Endothelial cell of umbilical vein (primary cell): ENCODE measurements at regions of chr2 and their contacts with region 1.

Region 1: GRCh38 chr2:69724540-69725159 is 17.3 kb upstream of the ANXA4 start:
- DNase-seq: peak; percentile 80
- H3K4me3 ChIP-seq: peak overlapping the region in 1 of 3 experiments; percentile 55
- H3K27ac ChIP-seq: no peak overlapping the region
- H3K4me1 ChIP-seq: peaks cover 2% of the 10 kb centered on the region
- H3K27me3 ChIP-seq: no peaks in the 10 kb centered on the region
- CTCF ChIP-seq: peak; percentile 87 to 88
- POLR2A ChIP-seq: no peak

Region 2: DNA sequence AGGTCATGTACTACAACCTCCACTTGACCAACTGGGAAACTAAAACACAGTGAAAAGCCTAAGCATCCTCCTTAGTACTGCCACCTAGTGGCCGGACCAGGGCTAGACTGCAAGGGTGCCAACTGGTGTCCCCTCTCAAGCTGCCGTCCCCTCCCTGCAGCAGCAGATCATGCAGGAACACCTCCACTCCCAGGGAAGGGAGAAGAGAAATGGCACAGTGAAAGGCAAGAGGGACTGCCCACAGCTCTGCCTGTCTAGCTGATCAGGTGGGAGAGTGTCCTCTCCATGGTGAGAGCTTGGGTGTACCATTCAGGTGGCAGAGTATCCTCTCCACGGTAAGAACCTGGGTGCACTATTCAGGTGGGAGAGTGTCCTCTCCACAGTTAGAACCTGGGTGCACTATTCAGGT is 159.2 kb before region 1 on chr2:
- CTCF ChIA-PET with region 1: interaction called, 74 read pairs
- POLR2A ChIA-PET with region 1: no interaction called
- dilution Hi-C with region 1: no loop called
- intact Hi-C with region 1: no loop called
- DNase-seq: peak; percentile 47
- H3K4me3 ChIP-seq: no peak overlapping the region
- H3K27ac ChIP-seq: no peak overlapping the region
- H3K4me1 ChIP-seq: peaks cover 5% of the 10 kb centered on the region
- H3K27me3 ChIP-seq: no peaks in the 10 kb centered on the region
- CTCF ChIP-seq: peak; percentile 82 to 86
- POLR2A ChIP-seq: no peak

Region 3: DNA sequence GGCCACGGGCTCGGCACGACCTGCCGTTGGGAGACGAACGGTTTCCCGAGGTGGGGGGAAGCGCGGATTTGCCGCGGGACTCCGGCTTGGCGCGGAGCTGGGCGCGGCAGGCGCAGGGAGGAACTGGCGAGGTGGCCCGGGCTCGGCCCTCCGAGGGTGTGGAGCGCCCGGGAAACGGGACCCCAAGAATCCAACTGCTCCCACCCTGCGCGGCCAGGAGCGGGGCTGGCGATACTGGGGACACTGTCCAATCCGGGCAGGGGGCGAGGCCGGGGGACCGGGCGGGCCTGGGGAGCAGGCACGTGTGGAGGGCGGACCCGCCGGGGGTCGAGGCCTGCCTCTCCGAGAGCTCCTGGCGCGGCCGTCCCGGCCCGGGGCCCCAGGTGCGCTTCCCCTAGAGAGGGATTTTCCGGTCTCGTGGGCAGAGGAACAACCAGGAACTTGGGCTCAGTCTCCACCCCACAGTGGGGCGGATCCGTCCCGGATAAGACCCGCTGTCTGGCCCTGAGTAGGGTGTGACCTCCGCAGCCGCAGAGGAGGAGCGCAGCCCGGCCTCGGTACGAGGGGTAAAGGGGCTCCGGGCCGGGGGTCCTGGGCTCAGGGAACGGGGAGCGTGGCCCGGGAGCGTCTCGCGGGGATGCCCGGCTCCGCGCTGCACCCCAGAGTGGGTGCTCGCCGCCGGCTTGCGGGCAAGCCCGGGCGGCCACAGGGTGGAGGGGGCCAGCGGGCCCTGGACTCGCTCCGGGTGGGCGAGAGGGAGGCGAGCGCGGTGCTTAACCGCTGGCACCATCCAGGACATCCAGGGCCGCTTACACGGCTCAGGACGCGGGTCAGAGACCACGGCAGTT is 17.2 kb after region 1 on chr2 and contains the start of gene ANXA4:
- CTCF ChIA-PET with region 1: interaction called, 68 read pairs
- POLR2A ChIA-PET with region 1: interaction called, 5 read pairs
- dilution Hi-C with region 1: no loop called
- intact Hi-C with region 1: no loop called
- DNase-seq: peak; percentile 48
- H3K4me3 ChIP-seq: peak within 1 kb of the TSS; percentile 56 to 79 (median 75)
- H3K27ac ChIP-seq: peak within 1 kb of the TSS; percentile 30
- H3K4me1 ChIP-seq: peaks cover 9% of the 10 kb centered on the region
- H3K27me3 ChIP-seq: no peaks in the 10 kb centered on the region
- CTCF ChIP-seq: no peak
- POLR2A ChIP-seq: no peak
- total RNA-seq, gene ANXA4: 70.8 and 79.6 TPM in 2 replicates

Region 4: GRCh38 chr2:69789175-69789721 is 64.6 kb after region 1 on chr2:
- CTCF ChIA-PET with region 1: interaction called, 18 read pairs
- POLR2A ChIA-PET with region 1: no interaction called
- dilution Hi-C with region 1: no loop called
- intact Hi-C with region 1: no loop called
- DNase-seq: no peak
- H3K4me3 ChIP-seq: no peak overlapping the region
- H3K27ac ChIP-seq: no peak overlapping the region
- H3K4me1 ChIP-seq: no peaks in the 10 kb centered on the region
- H3K27me3 ChIP-seq: no peaks in the 10 kb centered on the region
- CTCF ChIP-seq: no peak
- POLR2A ChIP-seq: no peak

Region 5: GRCh38 chr2:69848201-69848770 is 123.6 kb after region 1 on chr2:
- CTCF ChIA-PET with region 1: interaction called, 26 read pairs
- POLR2A ChIA-PET with region 1: no interaction called
- dilution Hi-C with region 1: no loop called
- intact Hi-C with region 1: no loop called
- DNase-seq: no peak
- H3K4me3 ChIP-seq: no peak overlapping the region
- H3K27ac ChIP-seq: no peak overlapping the region
- H3K4me1 ChIP-seq: peaks cover 6% of the 10 kb centered on the region
- H3K27me3 ChIP-seq: no peaks in the 10 kb centered on the region
- CTCF ChIP-seq: no peak
- POLR2A ChIP-seq: no peak

Region 6: DNA sequence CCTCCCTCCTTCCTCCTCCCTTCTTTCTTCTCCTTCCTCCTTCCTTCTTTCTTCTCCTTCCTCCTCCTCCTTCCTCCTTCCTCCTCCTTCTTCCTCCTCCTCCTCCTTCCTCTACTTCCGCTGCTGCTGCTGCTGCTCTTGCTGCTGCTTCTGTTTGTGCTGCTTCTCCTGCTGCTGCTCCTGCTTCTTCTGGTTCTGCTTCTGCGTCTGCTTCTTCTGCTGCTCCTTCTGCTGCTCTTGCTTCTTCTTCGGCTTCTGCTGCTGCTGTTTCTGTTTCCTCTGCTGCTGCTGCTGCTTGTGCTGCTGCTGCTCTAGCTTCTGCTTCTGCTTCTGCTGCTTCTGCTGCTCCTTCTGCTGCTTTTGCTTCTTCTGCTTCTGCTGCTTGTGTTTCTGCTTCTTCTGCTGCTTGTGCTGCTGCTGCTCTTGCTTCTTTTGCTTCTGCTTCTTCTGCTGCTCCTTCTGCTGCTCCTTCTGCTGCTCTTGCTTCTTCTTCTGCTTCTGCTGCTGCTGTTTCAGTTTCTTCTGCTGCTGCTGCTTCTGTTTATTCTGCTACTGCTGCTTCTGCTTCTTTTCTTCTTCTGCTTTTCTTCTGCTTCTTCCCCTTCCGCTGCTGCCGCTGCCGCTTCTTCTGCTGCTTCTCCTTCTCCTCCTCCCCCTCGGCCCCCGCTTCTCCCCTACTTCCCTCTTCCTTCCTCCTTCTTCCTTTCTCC is 177.7 kb after region 1 on chr2:
- CTCF ChIA-PET with region 1: interaction called, 22 read pairs
- POLR2A ChIA-PET with region 1: no interaction called
- dilution Hi-C with region 1: no loop called
- intact Hi-C with region 1: no loop called
- DNase-seq: no peak
- H3K4me3 ChIP-seq: no peak overlapping the region
- H3K27ac ChIP-seq: no peak overlapping the region
- H3K4me1 ChIP-seq: no peaks in the 10 kb centered on the region
- H3K27me3 ChIP-seq: no peaks in the 10 kb centered on the region
- CTCF ChIP-seq: no peak
- POLR2A ChIP-seq: no peak